Psoas muscle (tissue), 8 donors: ENCODE measurements at regions of chr11 and their contacts with region 1.

Region 1: DNA sequence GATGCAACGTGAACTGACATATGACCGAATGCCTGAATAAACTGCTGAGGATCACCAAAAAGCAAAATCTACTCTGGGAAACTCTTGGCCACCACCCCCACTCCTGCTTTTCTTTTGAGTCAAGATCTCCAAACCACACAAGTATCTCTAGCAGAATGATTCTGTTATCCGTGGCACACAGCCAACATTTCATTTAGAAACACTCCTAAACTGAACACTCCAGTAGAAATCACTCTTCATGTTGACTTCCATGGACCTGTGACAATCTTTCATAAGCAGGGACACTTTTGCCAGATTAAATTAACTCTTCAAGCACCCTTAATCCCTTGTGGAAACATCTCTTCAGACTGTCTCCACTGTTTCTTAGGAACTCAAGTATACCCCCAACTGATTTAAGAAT is 44.4 kb downstream of the VSIG10L2 start:
- DNase-seq: no peak
- ATAC-seq: no peak
- H3K4me3 ChIP-seq: no peak overlapping the region
- H3K27ac ChIP-seq: no peak overlapping the region
- H3K4me1 ChIP-seq: no peaks in the 10 kb centered on the region
- H3K27me3 ChIP-seq: no peaks in the 10 kb centered on the region
- CTCF ChIP-seq: no peak

Region 2: GRCh38 chr11:125270711-125271110 is 719.5 kb before region 1 on chr11:
- intact Hi-C with region 1: no loop called
- DNase-seq: no peak
- ATAC-seq: peak in 3 of 4 donors; percentile 26 to 51 (median 45)
- H3K4me3 ChIP-seq: no peak overlapping the region
- H3K27ac ChIP-seq: no peak overlapping the region
- H3K4me1 ChIP-seq: no peaks in the 10 kb centered on the region
- H3K27me3 ChIP-seq: no peaks in the 10 kb centered on the region
- CTCF ChIP-seq: no peak

Region 3: DNA sequence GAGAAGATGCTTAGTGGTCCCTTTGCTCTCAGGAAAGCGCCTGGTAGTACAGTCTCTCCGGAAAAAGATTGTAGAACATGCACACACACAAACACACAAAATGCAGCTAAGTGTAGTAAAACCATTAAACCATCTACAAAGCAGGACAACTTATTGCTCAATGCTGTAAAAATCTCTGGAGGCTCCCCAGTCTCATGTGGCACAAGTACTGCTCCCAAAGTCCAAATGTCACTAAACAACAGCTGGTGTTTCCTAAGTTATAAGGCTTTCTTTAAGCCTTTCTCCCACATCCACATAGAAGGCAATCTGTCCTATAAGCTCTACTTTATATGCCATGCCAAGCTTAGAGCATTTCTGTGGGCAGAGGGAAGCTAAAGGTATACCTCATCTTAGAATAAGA is 39.6 kb after region 1 on chr11:
- intact Hi-C with region 1: loop called in 1 of 2 experiments (anchors 2 kb)
- DNase-seq: no peak
- ATAC-seq: no peak
- H3K4me3 ChIP-seq: no peak overlapping the region
- H3K27ac ChIP-seq: no peak overlapping the region
- H3K4me1 ChIP-seq: no peaks in the 10 kb centered on the region
- H3K27me3 ChIP-seq: no peaks in the 10 kb centered on the region
- CTCF ChIP-seq: no peak